RWPE1 (cell line): ENCODE measurements at regions of chr10 and their contacts with region 1.

Region 1: DNA sequence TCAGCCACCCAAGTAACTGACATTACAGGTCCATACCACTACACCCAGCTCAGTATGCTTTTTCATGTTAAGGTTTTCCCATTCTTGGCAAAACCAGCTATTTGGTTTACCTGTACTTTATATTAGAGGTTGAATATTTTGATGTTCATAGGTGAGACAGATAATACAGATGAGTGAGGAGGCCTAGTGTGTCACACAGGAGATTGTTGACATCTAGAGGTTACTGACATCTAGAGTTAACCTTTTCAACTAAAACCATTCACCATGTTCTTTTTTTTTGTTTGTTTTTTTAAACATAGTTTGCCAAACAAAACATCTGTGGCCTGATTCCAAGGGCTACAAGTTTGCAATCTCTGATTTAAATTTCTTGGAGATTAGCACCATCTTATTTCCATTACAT is 8.0 kb downstream of the GHITM start:
- DNase-seq: no peak
- H3K27ac ChIP-seq: no peak overlapping the region
- CTCF ChIP-seq: no peak

Region 2: GRCh38 chr10:84008878-84009277 is 138.5 kb before region 1 on chr10:
- CTCF ChIA-PET with region 1: no interaction called
- POLR2A ChIA-PET with region 1: no interaction called
- DNase-seq: peak; percentile 20
- H3K27ac ChIP-seq: no peak overlapping the region
- CTCF ChIP-seq: peak; percentile 58

Region 3: GRCh38 chr10:84135836-84136235 is 11.5 kb before region 1 on chr10:
- CTCF ChIA-PET with region 1: interaction called, 10 read pairs
- POLR2A ChIA-PET with region 1: no interaction called
- DNase-seq: no peak
- H3K27ac ChIP-seq: no peak overlapping the region
- CTCF ChIP-seq: no peak

Region 4: GRCh38 chr10:84205049-84205852 is 57.9 kb after region 1 on chr10:
- CTCF ChIA-PET with region 1: interaction called, 11 read pairs
- POLR2A ChIA-PET with region 1: no interaction called
- DNase-seq: peak; percentile 76
- H3K27ac ChIP-seq: no peak overlapping the region
- CTCF ChIP-seq: peak; percentile 90